ENCODE measurements at regions of chr11 and their contacts with region 1.

Region 1: DNA sequence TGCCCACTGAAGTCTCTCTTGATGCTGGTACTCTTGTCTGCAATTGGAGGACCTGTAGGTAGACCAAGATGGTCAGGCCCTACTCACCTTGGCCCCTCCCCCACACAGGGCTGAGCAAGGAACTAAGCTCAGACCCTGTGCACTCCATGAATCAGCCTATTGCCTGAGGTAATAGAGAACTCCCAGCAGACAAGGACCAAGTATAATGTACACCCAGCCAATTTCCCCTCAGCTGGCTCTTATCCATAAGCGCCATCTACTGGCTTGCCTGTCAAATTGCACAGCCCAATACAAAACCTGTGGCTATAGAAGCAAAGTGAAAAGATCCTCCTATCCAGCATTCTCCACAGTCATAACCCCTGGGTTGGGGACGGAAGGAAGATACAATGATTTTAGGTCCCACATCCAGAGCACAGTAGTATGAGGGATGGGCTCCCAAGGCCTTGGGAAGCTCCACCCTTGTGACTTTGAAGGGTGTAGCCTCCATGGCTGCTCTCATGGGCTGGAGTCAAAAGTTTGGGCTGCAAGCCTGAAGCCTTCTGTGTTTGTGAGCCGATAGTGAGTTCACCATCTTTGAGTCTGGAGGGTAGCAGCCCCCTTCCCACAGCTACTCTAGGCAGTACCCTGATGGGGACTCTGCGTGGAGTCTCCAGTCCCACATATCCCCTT is 56.0 kb downstream of the GLYATL2 start:
- H3K4me3 ChIP-seq: no peak overlapping the region
- H3K27ac ChIP-seq: no peak overlapping the region
- H3K4me1 ChIP-seq: no peaks in the 10 kb centered on the region
- CTCF ChIP-seq: 0 out of 2 replicates have a peak, but pooled peaks have one; percentile 33

Region 2: GRCh38 chr11:58654079-58654907 is 134.2 kb before region 1 on chr11:
- CTCF ChIA-PET with region 1: interaction called, 15 read pairs
- POLR2A ChIA-PET with region 1: no interaction called
- H3K4me3 ChIP-seq: no peak overlapping the region
- H3K27ac ChIP-seq: no peak overlapping the region
- H3K4me1 ChIP-seq: no peaks in the 10 kb centered on the region
- CTCF ChIP-seq: peak; percentile 50; the same call in 1 of the 2 replicates

Region 3: DNA sequence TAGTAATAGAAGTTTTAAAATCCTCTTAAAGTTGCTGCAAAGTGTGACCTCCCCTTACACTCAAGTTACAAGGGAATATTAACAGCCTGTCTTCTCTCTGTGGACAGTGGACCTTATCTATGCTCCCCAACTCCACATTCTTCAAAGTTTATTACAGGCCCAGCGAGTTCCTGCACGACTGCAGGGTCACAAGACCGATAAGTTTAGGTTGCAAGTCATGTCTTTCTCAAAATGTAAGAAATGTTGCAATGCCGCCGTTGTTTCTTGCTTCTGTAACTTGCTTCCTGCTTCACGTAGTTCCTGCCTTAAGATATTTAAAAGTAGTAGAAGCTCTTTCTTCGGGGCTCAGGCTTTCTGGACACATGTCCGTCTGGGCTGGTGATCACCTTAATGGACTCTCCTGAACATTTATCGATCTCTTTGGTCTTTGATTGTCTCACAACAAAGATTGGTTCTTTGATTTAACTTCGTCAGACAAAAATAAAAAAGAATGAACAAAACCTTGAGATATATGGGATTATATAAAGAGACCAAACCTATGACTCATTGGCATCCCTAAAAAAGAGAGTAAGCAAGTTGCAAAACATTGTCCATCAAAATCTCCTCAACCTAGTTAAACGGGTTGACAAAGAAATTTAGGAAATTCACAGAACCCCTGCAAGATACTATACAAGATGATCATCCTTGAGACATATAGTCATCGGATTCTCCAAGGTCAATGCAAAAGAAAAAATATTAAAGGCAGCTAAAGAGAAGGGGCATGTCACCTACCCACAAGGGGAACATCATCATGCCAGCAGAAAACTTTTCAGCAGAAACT is 11.4 kb before region 1 on chr11:
- CTCF ChIA-PET with region 1: interaction called, 10 read pairs
- POLR2A ChIA-PET with region 1: no interaction called
- H3K4me3 ChIP-seq: no peak overlapping the region
- H3K27ac ChIP-seq: no peak overlapping the region
- H3K4me1 ChIP-seq: no peaks in the 10 kb centered on the region
- CTCF ChIP-seq: no peak

Region 4: GRCh38 chr11:58807343-58807742 is 18.9 kb after region 1 on chr11:
- CTCF ChIA-PET with region 1: no interaction called
- POLR2A ChIA-PET with region 1: no interaction called
- H3K4me3 ChIP-seq: no peak overlapping the region
- H3K27ac ChIP-seq: no peak overlapping the region
- H3K4me1 ChIP-seq: no peaks in the 10 kb centered on the region
- CTCF ChIP-seq: no peak